CD4-positive, alpha-beta memory T cell (primary cell): ENCODE measurements at regions of chr6 and their contacts with region 1.

Region 1: GRCh38 chr6:45663551-45664221 is 286.0 kb upstream of the SUPT3H start:
- DNase-seq: peak in 4 of 5 donors; percentile 36 to 49 (median 42)
- H3K4me3 ChIP-seq: no peak overlapping the region
- H3K4me3 Mint-ChIP-seq: peak overlapping the region; percentile 54 to 81 (median 74)
- H3K27ac ChIP-seq: no peak overlapping the region
- H3K27ac Mint-ChIP-seq: peak overlapping the region in 4 of 7 donors; percentile 8 to 57 (median 27)
- H3K4me1 ChIP-seq: peaks cover 30% of the 10 kb centered on the region
- H3K4me1 Mint-ChIP-seq: peaks cover 22 to 54% (median 36%) of the 10 kb centered on the region in 4 donors
- H3K27me3 ChIP-seq: no peaks in the 10 kb centered on the region
- H3K27me3 Mint-ChIP-seq: peaks cover 2 to 3% of the 10 kb centered on the region in 2 donors

Region 2: GRCh38 chr6:45677381-45678284 is 13.9 kb after region 1 on chr6:
- CTCF ChIA-PET with region 1: interaction called, 9 read pairs
- POLR2A ChIA-PET with region 1: interaction called, 8 read pairs
- intact Hi-C with region 1: loop called (anchors 2 kb)
- DNase-seq: peak; percentile 52 to 68 (median 58)
- H3K4me3 ChIP-seq: peak overlapping the region in 1 of 2 donors; percentile 27
- H3K4me3 Mint-ChIP-seq: peak overlapping the region; percentile 72 to 86 (median 79)
- H3K27ac ChIP-seq: peak overlapping the region; percentile 3
- H3K27ac Mint-ChIP-seq: peak overlapping the region; percentile 9 to 81 (median 73)
- H3K4me1 ChIP-seq: peaks cover 34% of the 10 kb centered on the region
- H3K4me1 Mint-ChIP-seq: peaks cover 25 to 53% (median 32%) of the 10 kb centered on the region in 4 donors
- H3K27me3 ChIP-seq: no peaks in the 10 kb centered on the region
- H3K27me3 Mint-ChIP-seq: no peaks in the 10 kb centered on the region